ENCODE measurements at regions of chr11 and their contacts with region 1.

Region 1: DNA sequence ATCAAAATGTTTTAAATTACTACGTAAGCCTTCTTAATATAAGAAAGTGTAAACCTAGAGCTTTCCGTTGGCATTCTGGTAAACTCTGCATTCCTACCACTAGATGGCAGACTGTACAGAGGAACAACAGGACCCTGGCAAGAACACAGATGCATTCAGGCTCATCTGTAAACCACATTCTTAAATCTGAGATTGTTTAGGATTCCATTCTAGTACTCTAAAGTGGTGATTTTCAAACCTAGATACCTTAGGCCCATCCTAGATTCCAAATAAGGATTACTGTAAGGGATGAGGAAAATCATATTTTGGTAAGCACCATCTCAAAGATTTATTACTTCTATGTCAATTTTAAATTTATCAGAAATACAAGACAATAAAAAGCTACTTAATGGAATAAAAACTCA is 26.9 kb downstream of the PICALM start:
- DNase-seq: peak; percentile 83
- ATAC-seq: peak; percentile 91
- H3K4me3 ChIP-seq: no peak overlapping the region
- H3K4me3 Mint-ChIP-seq: peak overlapping the region; percentile 1
- H3K27ac ChIP-seq: peak overlapping the region in 1 of 2 donors; percentile 48
- H3K27ac Mint-ChIP-seq: peak overlapping the region; percentile 2
- H3K4me1 ChIP-seq: peaks cover 25 to 52% of the 10 kb centered on the region in 2 donors
- H3K4me1 Mint-ChIP-seq: peaks cover 63% of the 10 kb centered on the region
- H3K27me3 ChIP-seq: no peaks in the 10 kb centered on the region
- H3K27me3 Mint-ChIP-seq: no peaks in the 10 kb centered on the region
- CTCF ChIP-seq: peak; percentile 89

Region 2: GRCh38 chr11:85810871-85811611 is 230.9 kb before region 1 on chr11 and contains the start of gene SYTL2:
- CTCF ChIA-PET with region 1: no interaction called
- POLR2A ChIA-PET with region 1: no interaction called
- intact Hi-C with region 1: no loop called
- DNase-seq: peak; percentile 64
- ATAC-seq: peak; percentile 98
- H3K4me3 ChIP-seq: peak within 1 kb of the TSS; percentile 39 to 70 (median 59)
- H3K4me3 Mint-ChIP-seq: peak within 1 kb of the TSS; percentile 88
- H3K27ac ChIP-seq: no peak within 1 kb of the TSS
- H3K27ac Mint-ChIP-seq: peak within 1 kb of the TSS; percentile 20
- H3K4me1 ChIP-seq: peaks cover 16 to 25% of the 10 kb centered on the region in 2 donors
- H3K4me1 Mint-ChIP-seq: peaks cover 23% of the 10 kb centered on the region
- H3K27me3 ChIP-seq: peaks cover 0 to 30% (median 3%) of the 10 kb centered on the region in 4 experiments
- H3K27me3 Mint-ChIP-seq: peaks cover 24% of the 10 kb centered on the region
- CTCF ChIP-seq: no peak
- total RNA-seq, gene SYTL2: 2.3 and 2.9 TPM in 2 replicates

Region 3: GRCh38 chr11:86021377-86021776 is 20.6 kb before region 1 on chr11:
- CTCF ChIA-PET with region 1: interaction called, 19 read pairs
- POLR2A ChIA-PET with region 1: no interaction called
- intact Hi-C with region 1: no loop called
- DNase-seq: no peak
- ATAC-seq: no peak
- H3K4me3 ChIP-seq: no peak overlapping the region
- H3K4me3 Mint-ChIP-seq: no peak overlapping the region
- H3K27ac ChIP-seq: peak overlapping the region in 1 of 2 donors; percentile 37
- H3K27ac Mint-ChIP-seq: no peak overlapping the region
- H3K4me1 ChIP-seq: no peaks in the 10 kb centered on the region
- H3K4me1 Mint-ChIP-seq: peaks cover 17% of the 10 kb centered on the region
- H3K27me3 ChIP-seq: no peaks in the 10 kb centered on the region
- H3K27me3 Mint-ChIP-seq: no peaks in the 10 kb centered on the region
- CTCF ChIP-seq: no peak

Region 4: GRCh38 chr11:86058360-86058759 is 16.4 kb after region 1 on chr11:
- CTCF ChIA-PET with region 1: interaction called, 11 read pairs
- POLR2A ChIA-PET with region 1: no interaction called
- intact Hi-C with region 1: loop called (anchors 2 kb)
- DNase-seq: no peak
- ATAC-seq: no peak
- H3K4me3 ChIP-seq: no peak overlapping the region
- H3K4me3 Mint-ChIP-seq: no peak overlapping the region
- H3K27ac ChIP-seq: peak overlapping the region in 1 of 2 donors; percentile 13
- H3K27ac Mint-ChIP-seq: no peak overlapping the region
- H3K4me1 ChIP-seq: peaks cover 39 to 71% of the 10 kb centered on the region in 2 donors
- H3K4me1 Mint-ChIP-seq: peaks cover 79% of the 10 kb centered on the region
- H3K27me3 ChIP-seq: no peaks in the 10 kb centered on the region
- H3K27me3 Mint-ChIP-seq: no peaks in the 10 kb centered on the region
- CTCF ChIP-seq: no peak

Region 5: DNA sequence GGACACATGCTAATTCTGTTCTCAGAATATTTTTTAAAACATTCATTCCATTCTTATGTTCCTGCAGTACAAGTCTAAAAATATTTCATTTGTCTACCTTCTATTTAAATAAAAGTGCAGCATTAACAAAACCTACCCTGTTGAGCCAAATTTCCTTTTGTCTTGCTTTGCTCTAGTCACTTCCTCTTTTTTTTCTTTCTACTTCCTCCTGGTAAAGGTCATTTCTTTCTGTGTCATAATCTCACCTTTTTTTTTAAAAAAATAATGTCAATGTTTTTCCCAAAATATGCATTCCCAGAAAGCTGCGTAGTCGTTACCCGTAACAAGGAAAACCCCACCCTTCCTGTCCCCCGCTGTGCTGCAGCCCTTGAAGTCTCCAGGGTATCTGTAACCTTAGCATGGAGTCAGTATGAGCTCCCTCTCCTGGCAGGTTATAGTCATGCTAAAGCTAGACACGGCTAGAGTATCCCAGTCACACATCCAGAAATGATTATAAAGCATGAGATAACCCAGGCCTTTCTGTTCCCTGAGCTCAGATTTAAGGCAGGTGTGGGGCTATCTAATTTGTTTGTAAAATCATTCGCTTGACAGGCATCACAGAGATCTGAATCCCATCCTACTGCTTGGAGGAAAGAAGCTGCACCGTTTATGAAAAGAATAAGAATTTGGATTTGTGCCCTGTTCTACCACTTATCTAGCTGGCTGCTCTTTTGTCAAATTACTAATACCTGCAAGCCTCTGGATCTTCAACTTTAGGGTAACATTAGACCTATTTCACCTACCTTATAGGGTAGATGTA is 151.5 kb after region 1 on chr11:
- CTCF ChIA-PET with region 1: interaction called, 80 read pairs
- POLR2A ChIA-PET with region 1: interaction called, 3 read pairs
- intact Hi-C with region 1: loop called (anchors 1 kb)
- DNase-seq: peak; percentile 80
- ATAC-seq: peak; percentile 94
- H3K4me3 ChIP-seq: peak overlapping the region; percentile 24 to 62 (median 52)
- H3K4me3 Mint-ChIP-seq: peak overlapping the region; percentile 67
- H3K27ac ChIP-seq: peak overlapping the region; percentile 21 to 70
- H3K27ac Mint-ChIP-seq: peak overlapping the region; percentile 90
- H3K4me1 ChIP-seq: peaks cover 20 to 22% of the 10 kb centered on the region in 2 donors
- H3K4me1 Mint-ChIP-seq: peaks cover 28% of the 10 kb centered on the region
- H3K27me3 ChIP-seq: no peaks in the 10 kb centered on the region
- H3K27me3 Mint-ChIP-seq: no peaks in the 10 kb centered on the region
- CTCF ChIP-seq: peak; percentile 79

Region 6: GRCh38 chr11:86218125-86219084 is 176.4 kb after region 1 on chr11:
- CTCF ChIA-PET with region 1: interaction called, 48 read pairs
- POLR2A ChIA-PET with region 1: interaction called, 3 read pairs
- intact Hi-C with region 1: loop called (anchors 1 kb)
- DNase-seq: peak; percentile 65
- ATAC-seq: peak; percentile 29
- H3K4me3 ChIP-seq: peak overlapping the region in 4 of 5 experiments; percentile 21 to 53 (median 34)
- H3K4me3 Mint-ChIP-seq: peak overlapping the region; percentile 75
- H3K27ac ChIP-seq: peak overlapping the region; percentile 62 to 77
- H3K27ac Mint-ChIP-seq: peak overlapping the region; percentile 86
- H3K4me1 ChIP-seq: peaks cover 31 to 36% of the 10 kb centered on the region in 2 donors
- H3K4me1 Mint-ChIP-seq: peaks cover 37% of the 10 kb centered on the region
- H3K27me3 ChIP-seq: no peaks in the 10 kb centered on the region
- H3K27me3 Mint-ChIP-seq: no peaks in the 10 kb centered on the region
- CTCF ChIP-seq: peak; percentile 68

Region 7: DNA sequence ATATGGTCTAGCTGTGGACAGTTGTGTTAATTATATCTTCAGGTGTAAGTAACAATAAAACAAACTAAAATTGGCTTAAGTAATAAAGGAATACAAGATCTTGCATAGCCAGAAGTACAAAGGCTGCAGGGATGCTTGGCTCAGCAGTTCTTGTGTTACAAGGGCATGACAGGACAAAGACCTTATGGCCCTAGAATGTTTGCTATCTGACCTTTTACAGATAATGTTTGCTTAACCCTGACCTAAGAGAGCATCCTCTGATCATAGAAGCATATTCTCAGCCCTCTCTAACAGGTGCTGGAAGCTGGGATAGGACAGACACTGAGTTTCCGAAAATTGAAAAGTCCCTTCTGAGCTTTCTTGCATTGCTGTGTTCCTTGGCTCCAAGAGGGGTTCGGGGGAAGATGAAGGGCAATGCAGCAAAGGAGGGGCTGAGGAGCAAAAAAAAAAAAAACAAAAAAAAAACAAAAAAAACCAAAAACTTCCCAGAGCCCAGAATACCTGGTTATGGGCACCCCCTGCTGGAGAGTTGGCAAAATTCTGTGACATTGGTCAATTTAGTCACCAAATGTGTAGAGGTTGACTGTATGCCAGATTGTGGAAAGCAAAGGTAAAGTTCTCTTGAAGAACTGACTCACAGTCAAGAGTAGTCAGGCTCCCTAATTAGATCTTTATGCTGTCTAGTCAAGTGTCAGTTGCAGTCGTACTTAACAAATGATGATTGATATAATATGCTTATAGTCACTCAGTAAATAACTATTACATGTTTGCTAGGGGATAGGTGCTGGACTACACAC is 249.7 kb after region 1 on chr11:
- CTCF ChIA-PET with region 1: interaction called, 83 read pairs
- POLR2A ChIA-PET with region 1: no interaction called
- intact Hi-C with region 1: loop called (anchors 1 kb)
- DNase-seq: peak; percentile 71
- ATAC-seq: peak; percentile 62
- H3K4me3 ChIP-seq: no peak overlapping the region
- H3K4me3 Mint-ChIP-seq: no peak overlapping the region
- H3K27ac ChIP-seq: no peak overlapping the region
- H3K27ac Mint-ChIP-seq: no peak overlapping the region
- H3K4me1 ChIP-seq: peaks cover 16 to 26% of the 10 kb centered on the region in 2 donors
- H3K4me1 Mint-ChIP-seq: peaks cover 26% of the 10 kb centered on the region
- H3K27me3 ChIP-seq: no peaks in the 10 kb centered on the region
- H3K27me3 Mint-ChIP-seq: no peaks in the 10 kb centered on the region
- CTCF ChIP-seq: peak; percentile 86

Measured in B cell (primary cell).